CD8-positive, alpha-beta T cell (primary cell): ENCODE measurements at regions of chr12 and their contacts with region 1.

Region 1: GRCh38 chr12:122225683-122226407 is at the start of gene DIABLO:
- DNase-seq: peak; percentile 99 to 100 (median 100)
- ATAC-seq: peak; percentile 91
- H3K4me3 ChIP-seq: peak within 1 kb of the TSS; percentile 79 to 91
- H3K4me3 Mint-ChIP-seq: peak within 1 kb of the TSS; percentile 86
- H3K27ac ChIP-seq: peak within 1 kb of the TSS; percentile 97 to 98
- H3K27ac Mint-ChIP-seq: peak within 1 kb of the TSS; percentile 92
- H3K4me1 ChIP-seq: peaks cover 41% of the 10 kb centered on the region
- H3K4me1 Mint-ChIP-seq: peaks cover 52% of the 10 kb centered on the region
- H3K27me3 ChIP-seq: no peaks in the 10 kb centered on the region
- H3K27me3 Mint-ChIP-seq: no peaks in the 10 kb centered on the region
- CTCF ChIP-seq: no peak
- total RNA-seq, gene DIABLO: 104 to 112 TPM

Region 2: GRCh38 chr12:121467115-121467793 is 758.6 kb before region 1 on chr12:
- CTCF ChIA-PET with region 1: no interaction called
- POLR2A ChIA-PET with region 1: no interaction called
- intact Hi-C with region 1: loop called in 1 of 2 experiments (anchors 10 kb)
- DNase-seq: peak; percentile 77 to 94 (median 86)
- ATAC-seq: peak; percentile 85
- H3K4me3 ChIP-seq: peak overlapping the region; percentile 49 to 55
- H3K4me3 Mint-ChIP-seq: peak overlapping the region; percentile 68
- H3K27ac ChIP-seq: peak overlapping the region; percentile 44 to 59
- H3K27ac Mint-ChIP-seq: no peak overlapping the region
- H3K4me1 ChIP-seq: peaks cover 26% of the 10 kb centered on the region
- H3K4me1 Mint-ChIP-seq: peaks cover 37% of the 10 kb centered on the region
- H3K27me3 ChIP-seq: no peaks in the 10 kb centered on the region
- H3K27me3 Mint-ChIP-seq: no peaks in the 10 kb centered on the region
- CTCF ChIP-seq: no peak

Region 3: DNA sequence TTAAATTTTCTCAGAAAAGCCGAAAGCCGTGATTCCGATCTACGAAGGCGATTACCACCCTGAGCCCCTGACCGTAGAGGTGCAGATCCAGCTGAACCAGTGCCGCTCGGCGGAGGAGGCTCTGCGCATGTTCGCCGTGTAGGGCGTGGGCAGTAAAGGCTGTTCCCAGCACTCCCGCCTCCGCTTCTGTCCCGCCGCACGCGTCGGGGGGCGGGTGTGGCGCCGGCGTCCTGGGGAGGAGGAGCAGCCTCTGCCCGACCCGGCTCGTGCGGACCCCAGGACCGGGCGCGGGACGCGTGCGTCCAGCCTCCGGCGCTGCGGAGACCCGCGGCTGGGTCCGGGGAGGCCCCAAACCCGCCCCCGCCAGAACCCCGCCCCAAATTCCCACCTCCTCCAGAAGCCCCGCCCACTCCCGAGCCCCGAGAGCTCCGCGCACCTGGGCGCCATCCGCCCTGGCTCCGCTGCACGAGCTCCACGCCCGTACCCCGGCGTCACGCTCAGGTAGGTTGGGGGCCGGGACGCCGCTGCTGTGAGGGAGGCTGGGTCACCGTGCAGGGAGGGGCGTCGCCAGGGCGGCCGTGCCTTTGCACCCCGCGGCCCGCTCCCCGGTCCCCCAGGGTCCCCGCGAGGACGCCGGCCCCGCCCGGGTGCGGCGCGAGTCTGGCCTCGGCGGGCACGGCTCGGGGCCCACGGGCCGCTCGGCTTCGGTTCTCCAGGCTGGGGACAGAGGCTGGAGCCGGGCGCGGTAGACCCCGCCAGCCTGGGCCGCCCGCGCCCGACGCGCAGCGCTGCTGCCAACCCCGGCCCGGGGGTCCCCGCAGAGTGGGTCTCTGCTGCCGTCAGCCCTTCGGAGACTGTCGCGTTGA is 22.3 kb before region 1 on chr12 and contains the start of gene B3GNT4:
- CTCF ChIA-PET with region 1: no interaction called
- POLR2A ChIA-PET with region 1: interaction called, 3 read pairs
- intact Hi-C with region 1: loop called in 1 of 2 experiments (anchors 1 kb)
- DNase-seq: peak in 8 of 9 experiments; percentile 50 to 79 (median 70)
- ATAC-seq: peak; percentile 79
- H3K4me3 ChIP-seq: peak within 1 kb of the TSS; percentile 52 to 61
- H3K4me3 Mint-ChIP-seq: peak within 1 kb of the TSS; percentile 83
- H3K27ac ChIP-seq: no peak within 1 kb of the TSS
- H3K27ac Mint-ChIP-seq: no peak within 1 kb of the TSS
- H3K4me1 ChIP-seq: peaks cover 11% of the 10 kb centered on the region
- H3K4me1 Mint-ChIP-seq: peaks cover 16% of the 10 kb centered on the region
- H3K27me3 ChIP-seq: peaks cover 0 to 4% of the 10 kb centered on the region in 2 experiments
- H3K27me3 Mint-ChIP-seq: peaks cover 5% of the 10 kb centered on the region
- CTCF ChIP-seq: no peak
- total RNA-seq, gene B3GNT4: not detected

Region 4: DNA sequence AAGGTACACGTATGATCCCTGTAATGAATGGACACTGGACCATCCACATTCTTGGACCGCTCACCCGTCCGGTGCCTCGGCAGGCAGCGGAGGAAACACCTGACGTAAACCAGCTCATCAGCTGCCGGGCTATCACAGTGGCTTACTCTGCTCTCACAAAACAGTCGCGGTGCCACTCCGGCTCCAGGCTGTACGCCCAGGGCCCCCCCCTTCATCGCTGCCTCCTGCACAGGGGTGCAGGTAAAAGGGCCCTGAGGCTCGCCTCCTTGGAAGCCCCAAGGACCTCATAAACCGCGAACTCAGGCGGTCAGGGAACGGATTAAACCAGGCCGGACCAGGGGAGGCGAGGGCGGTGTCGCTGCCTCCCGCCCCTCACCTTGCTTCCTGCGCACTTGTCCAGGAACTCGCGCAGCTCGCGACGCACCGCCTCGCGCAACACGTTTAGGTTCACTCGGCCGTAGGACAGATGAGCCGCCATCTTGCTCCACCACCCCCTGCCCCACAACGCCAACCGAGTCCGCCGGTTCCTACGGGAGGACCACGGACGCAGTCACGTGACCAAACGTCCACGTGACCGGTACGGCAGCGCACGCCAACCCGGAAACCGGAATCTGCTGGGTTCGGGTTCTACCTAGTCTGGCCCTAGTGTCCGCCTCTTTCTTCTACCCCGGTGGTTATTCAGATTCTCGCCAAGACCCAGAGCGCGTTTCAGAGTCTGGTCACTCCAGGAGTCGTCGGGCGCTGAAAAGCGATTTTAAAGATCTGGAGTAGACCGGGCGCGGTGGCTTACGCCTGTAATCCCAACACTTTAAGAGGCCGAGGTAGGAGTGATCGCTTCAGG is 40.3 kb after region 1 on chr12 and contains the start of gene VPS33A:
- CTCF ChIA-PET with region 1: interaction called, 3 read pairs
- POLR2A ChIA-PET with region 1: interaction called, 43 read pairs
- intact Hi-C with region 1: loop called (anchors 1 kb)
- DNase-seq: peak; percentile 82 to 97 (median 92)
- ATAC-seq: peak; percentile 72
- H3K4me3 ChIP-seq: peak within 1 kb of the TSS; percentile 89 to 95
- H3K4me3 Mint-ChIP-seq: peak within 1 kb of the TSS; percentile 97
- H3K27ac ChIP-seq: peak within 1 kb of the TSS; percentile 95 to 96
- H3K27ac Mint-ChIP-seq: peak within 1 kb of the TSS; percentile 100
- H3K4me1 ChIP-seq: peaks cover 9% of the 10 kb centered on the region
- H3K4me1 Mint-ChIP-seq: peaks cover 36% of the 10 kb centered on the region
- H3K27me3 ChIP-seq: no peaks in the 10 kb centered on the region
- H3K27me3 Mint-ChIP-seq: no peaks in the 10 kb centered on the region
- CTCF ChIP-seq: no peak
- total RNA-seq, gene VPS33A: 11.6 to 13.1 TPM

Region 5: GRCh38 chr12:122421821-122422729 is 196.2 kb after region 1 on chr12 and contains the start of gene CLIP1:
- CTCF ChIA-PET with region 1: no interaction called
- POLR2A ChIA-PET with region 1: no interaction called
- intact Hi-C with region 1: no loop called
- DNase-seq: peak; percentile 16 to 79 (median 55)
- ATAC-seq: peak; percentile 80
- H3K4me3 ChIP-seq: peak within 1 kb of the TSS; percentile 49 to 68
- H3K4me3 Mint-ChIP-seq: peak within 1 kb of the TSS; percentile 91
- H3K27ac ChIP-seq: peak within 1 kb of the TSS; percentile 49 to 71
- H3K27ac Mint-ChIP-seq: peak within 1 kb of the TSS; percentile 84
- H3K4me1 ChIP-seq: peaks cover 19% of the 10 kb centered on the region
- H3K4me1 Mint-ChIP-seq: peaks cover 30% of the 10 kb centered on the region
- H3K27me3 ChIP-seq: no peaks in the 10 kb centered on the region
- H3K27me3 Mint-ChIP-seq: no peaks in the 10 kb centered on the region
- CTCF ChIP-seq: peak; percentile 52
- total RNA-seq, gene CLIP1: 48.6 to 49.6 TPM

Region 6: DNA sequence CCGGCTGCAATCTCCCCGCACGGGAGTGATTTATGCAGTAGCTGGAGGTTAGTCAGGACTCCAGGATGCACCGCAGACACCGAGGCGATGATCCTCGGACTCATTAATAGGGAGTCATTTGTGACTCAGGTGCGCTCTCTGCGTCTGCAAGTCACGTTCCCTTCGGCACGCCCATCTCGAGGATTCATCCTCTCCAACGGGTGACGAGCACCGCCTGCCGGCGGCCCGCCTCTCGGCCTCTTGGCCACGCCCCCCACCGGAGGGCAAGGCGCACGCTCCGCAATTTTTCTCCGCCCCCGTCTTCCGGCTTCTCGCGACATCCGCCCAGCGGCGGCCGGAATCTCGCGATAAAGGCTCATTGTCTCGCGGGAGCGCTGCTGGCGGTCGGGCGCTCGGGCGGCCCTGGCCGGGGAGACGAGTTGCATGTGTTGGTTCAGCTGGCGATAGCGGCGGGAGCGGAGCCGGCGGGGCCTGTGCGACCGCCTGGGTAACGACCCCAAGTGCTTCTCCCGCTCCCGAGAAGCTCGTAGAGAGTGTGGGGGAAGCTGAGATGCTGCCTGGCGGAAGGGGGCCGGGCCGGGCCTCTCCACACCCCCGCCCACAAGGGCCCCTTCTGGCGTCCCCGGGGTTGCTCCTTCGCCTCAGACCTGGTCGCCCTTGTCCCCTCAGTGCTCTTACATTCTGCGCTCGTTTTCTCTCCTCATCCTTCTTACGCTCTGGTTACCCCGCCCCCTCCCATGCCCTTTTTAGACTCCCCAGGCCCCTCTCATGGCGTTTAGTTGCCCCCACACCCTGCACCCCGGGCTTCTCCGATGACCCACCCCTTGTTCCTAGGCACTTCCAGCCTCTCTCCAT is 526.8 kb after region 1 on chr12 and contains the start of gene DENR:
- CTCF ChIA-PET with region 1: no interaction called
- POLR2A ChIA-PET with region 1: no interaction called
- intact Hi-C with region 1: loop called in 1 of 2 experiments (anchors 10 kb)
- DNase-seq: peak; percentile 99
- ATAC-seq: peak; percentile 96
- H3K4me3 ChIP-seq: peak within 1 kb of the TSS; percentile 80 to 90
- H3K4me3 Mint-ChIP-seq: peak within 1 kb of the TSS; percentile 96
- H3K27ac ChIP-seq: peak within 1 kb of the TSS; percentile 87 to 94
- H3K27ac Mint-ChIP-seq: peak within 1 kb of the TSS; percentile 97
- H3K4me1 ChIP-seq: peaks cover 26% of the 10 kb centered on the region
- H3K4me1 Mint-ChIP-seq: peaks cover 47% of the 10 kb centered on the region
- H3K27me3 ChIP-seq: no peaks in the 10 kb centered on the region
- H3K27me3 Mint-ChIP-seq: no peaks in the 10 kb centered on the region
- CTCF ChIP-seq: peak; percentile 56
- total RNA-seq, gene DENR: 27.8 to 29.7 TPM

Region 7: DNA sequence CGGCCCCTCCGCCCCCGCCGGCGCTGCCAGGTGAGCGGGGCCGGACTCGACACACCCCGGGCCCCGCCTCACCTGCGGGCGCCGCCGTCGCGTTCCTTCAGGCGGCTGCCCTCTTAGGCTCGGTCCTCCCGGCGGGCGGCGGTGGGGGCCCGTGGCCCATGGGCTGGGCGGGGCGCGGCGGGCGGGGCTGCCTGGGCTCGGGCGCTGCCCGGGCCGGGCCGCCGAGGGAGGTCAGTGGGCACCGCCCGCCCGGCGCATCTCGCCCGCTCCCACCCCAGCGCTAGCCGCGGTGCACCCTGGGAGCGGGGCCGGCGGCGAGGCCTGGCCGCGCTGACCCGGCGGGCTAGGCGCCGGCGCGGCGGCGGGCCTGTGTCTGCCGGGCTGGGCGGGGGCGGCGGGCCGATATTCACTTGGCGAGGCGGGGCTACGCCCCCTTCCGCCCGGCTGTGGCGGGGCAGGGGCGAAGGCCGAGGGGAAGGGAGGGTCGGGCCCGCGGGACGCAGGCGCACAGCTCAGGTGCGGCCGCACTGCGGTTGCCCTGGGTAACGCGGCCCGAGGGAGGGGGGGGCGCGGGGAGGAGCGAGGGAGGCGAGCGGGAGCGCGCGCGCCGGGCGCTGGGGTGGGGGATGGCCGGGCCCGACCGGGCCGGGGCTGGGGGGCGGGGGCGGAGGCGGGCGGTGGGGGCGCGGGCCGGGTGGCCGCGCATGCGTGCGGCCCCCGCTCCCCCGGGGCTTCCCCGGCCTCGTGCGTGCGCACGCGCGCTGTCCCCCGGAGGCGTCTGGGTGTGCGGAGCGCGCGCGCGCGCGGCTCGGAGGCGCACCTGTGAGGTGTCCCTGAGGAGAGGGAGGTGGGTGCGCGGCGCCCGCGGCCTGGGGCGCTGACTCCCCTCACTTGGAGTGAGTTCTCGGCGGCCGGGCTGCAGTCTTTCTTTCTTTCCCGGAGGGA is 1746.9 kb after region 1 on chr12 and contains the starts of genes CCDC92 and ZNF664:
- CTCF ChIA-PET with region 1: no interaction called
- POLR2A ChIA-PET with region 1: no interaction called
- intact Hi-C with region 1: loop called in 1 of 2 experiments (anchors 5 kb)
- DNase-seq: peak; percentile 88 to 98 (median 95)
- ATAC-seq: peak; percentile 75
- H3K4me3 ChIP-seq: peak within 1 kb of the TSS; percentile 60 to 63
- H3K4me3 Mint-ChIP-seq: peak within 1 kb of the TSS; percentile 91
- H3K27ac ChIP-seq: peak within 1 kb of the TSS; percentile 34 to 44
- H3K27ac Mint-ChIP-seq: peak within 1 kb of the TSS; percentile 89
- H3K4me1 ChIP-seq: peaks cover 19% of the 10 kb centered on the region
- H3K4me1 Mint-ChIP-seq: peaks cover 36% of the 10 kb centered on the region
- H3K27me3 ChIP-seq: no peaks in the 10 kb centered on the region
- H3K27me3 Mint-ChIP-seq: no peaks in the 10 kb centered on the region
- CTCF ChIP-seq: no peak
- total RNA-seq, gene CCDC92: 6.9 to 8.1 TPM
- total RNA-seq, gene ZNF664: 14.2 to 17.9 TPM